AG04450 (cell line): ENCODE measurements at regions of chr15 and their contacts with region 1.

Region 1: DNA sequence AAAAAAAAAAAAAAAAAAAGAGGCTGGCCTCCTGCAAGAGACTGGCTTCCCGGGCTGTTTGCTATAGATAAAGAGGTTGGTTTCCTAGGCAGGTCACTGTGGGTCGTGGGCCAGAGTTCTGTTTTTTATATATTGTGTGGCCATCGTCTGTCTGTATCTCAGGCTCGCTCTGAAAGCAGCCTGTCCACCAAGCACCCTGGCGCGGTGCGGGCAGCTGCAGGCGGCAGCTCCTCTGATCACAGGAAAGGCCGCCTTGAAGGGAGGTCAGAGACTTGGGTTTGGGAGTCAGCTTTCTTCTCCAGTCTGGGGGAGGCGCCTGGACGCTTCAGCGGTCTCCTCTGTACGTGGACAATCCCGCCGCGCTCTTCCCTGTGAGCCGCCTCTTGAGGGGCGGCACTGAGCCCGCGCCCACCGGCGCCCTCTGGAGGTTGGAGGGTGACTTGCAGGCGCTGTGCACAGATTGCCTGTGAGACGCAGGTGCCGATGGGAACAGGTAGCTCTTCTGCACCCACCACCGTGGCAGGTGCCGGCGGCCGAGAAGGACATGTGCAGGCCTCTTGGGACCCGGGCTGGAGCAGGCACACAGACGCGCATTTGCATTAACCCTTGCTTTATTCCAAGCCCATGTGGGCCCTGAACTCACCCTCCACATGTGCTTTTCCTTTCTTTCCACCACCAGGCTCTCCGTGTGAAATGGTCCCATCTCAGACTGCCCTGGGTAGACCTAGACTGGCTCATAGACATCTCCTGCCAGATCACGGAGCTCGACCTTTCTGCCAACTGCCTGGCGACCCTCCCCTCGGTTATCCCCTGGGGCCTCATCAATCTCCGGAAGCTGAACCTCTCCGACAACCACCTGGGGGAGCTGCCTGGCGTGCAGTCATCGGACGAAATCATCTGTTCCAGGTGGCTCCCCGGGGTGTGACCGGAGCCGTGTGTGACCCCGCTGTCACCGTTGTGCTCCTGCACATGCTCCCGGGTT is 89.3 kb downstream of the LRRK1 start:
- DNase-seq: no peak
- H3K4me3 ChIP-seq: peak overlapping the region; percentile 54
- H3K27ac ChIP-seq: no peak overlapping the region
- H3K27me3 ChIP-seq: no peaks in the 10 kb centered on the region
- CTCF ChIP-seq: peak; percentile 97

Region 2: GRCh38 chr15:100191161-100191560 is 817.3 kb before region 1 on chr15:
- CTCF ChIA-PET with region 1: no interaction called
- POLR2A ChIA-PET with region 1: no interaction called
- DNase-seq: no peak
- H3K4me3 ChIP-seq: no peak overlapping the region
- H3K27ac ChIP-seq: no peak overlapping the region
- H3K27me3 ChIP-seq: no peaks in the 10 kb centered on the region
- CTCF ChIP-seq: no peak

Region 3: DNA sequence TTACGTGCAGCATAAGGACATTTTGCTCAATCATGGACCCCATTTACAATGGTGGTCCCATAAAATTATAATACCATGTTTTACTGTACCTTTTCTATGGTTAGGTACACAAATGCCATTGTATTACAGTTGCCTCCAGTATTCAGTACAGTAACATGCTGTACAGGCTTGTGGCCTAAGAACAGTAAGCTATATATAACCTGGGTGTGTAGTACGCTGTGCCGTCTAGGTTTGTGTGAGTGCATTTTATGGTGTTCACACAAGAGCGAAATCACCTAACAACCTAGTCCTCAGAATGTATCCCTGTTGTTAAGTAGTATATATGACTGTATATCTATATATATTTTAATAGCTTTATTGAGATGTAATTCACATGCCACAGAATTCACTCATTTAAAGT is 393.5 kb before region 1 on chr15:
- CTCF ChIA-PET with region 1: interaction called, 15 read pairs
- POLR2A ChIA-PET with region 1: no interaction called
- DNase-seq: no peak
- H3K4me3 ChIP-seq: no peak overlapping the region
- H3K27ac ChIP-seq: no peak overlapping the region
- H3K27me3 ChIP-seq: no peaks in the 10 kb centered on the region
- CTCF ChIP-seq: no peak

Region 4: GRCh38 chr15:100703032-100703578 is 305.3 kb before region 1 on chr15:
- CTCF ChIA-PET with region 1: no interaction called
- POLR2A ChIA-PET with region 1: no interaction called
- DNase-seq: peak; percentile 56
- H3K4me3 ChIP-seq: no peak overlapping the region
- H3K27ac ChIP-seq: peak overlapping the region; percentile 34
- H3K27me3 ChIP-seq: no peaks in the 10 kb centered on the region
- CTCF ChIP-seq: no peak

Region 5: DNA sequence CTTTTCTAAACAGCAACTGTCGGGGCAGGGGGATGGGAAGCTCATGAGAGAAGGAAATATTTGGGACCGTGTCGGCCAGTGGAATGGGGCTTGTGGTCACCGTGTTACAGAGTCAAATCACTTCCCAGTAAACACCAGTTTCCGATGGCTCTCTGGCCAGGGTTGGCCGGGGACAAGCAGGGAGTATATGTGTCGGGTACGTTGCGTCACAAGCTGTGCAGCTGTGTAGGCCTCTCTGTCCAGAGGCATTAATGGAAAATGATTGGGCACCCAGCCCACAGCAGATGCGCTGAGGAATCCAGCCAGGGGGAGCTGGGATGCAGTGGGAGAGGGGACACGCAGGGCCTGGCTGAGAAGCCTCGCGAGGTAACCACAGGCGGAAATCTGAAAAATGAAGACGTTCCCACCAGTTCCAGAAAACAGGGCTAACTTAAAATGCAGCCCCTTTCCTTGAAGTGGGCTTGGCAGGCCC is 144.6 kb before region 1 on chr15:
- CTCF ChIA-PET with region 1: interaction called, 25 read pairs
- POLR2A ChIA-PET with region 1: no interaction called
- DNase-seq: peak; percentile 55
- H3K4me3 ChIP-seq: no peak overlapping the region
- H3K27ac ChIP-seq: peak overlapping the region; percentile 68
- H3K27me3 ChIP-seq: no peaks in the 10 kb centered on the region
- CTCF ChIP-seq: 0 out of 2 replicates have a peak, but pooled peaks have one; percentile 8

Region 6: DNA sequence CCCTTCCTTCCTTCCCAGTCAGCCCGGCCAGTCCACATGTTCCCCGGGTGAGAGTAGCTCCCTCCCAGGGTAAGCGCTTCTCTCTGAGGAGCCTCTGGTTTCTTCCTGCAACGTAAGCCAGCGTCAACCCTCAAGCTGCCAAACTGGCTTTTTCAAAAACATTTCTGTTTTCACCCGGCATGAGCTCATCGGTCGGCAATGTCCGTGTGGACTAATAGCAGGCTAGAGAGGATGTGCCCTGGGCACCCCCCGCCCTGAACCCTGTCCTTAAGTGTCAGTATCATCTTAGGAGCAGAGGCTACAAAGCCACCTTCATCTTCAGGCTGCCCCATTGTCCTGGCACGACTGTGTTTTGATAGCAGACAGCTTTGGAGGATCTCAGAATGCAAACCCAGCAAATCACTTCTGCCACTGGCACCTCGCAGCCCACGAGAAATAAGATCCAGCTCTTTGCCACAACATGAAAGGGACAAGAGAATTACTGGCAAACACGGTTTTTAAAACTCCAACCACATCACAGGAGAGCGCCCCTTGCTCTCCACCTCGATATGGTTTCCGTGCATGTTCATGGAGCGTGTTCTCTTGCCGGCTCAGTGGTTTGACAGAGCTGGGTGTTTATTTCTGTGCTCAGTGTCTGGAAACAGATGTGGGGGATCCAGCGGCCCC is 118.9 kb before region 1 on chr15:
- CTCF ChIA-PET with region 1: interaction called, 16 read pairs
- POLR2A ChIA-PET with region 1: no interaction called
- DNase-seq: peak; percentile 69
- H3K4me3 ChIP-seq: no peak overlapping the region
- H3K27ac ChIP-seq: peak overlapping the region; percentile 65
- H3K27me3 ChIP-seq: no peaks in the 10 kb centered on the region
- CTCF ChIP-seq: no peak

Region 7: GRCh38 chr15:100944244-100944895 is 64.1 kb before region 1 on chr15:
- CTCF ChIA-PET with region 1: interaction called, 13 read pairs
- POLR2A ChIA-PET with region 1: no interaction called
- DNase-seq: no peak
- H3K4me3 ChIP-seq: no peak overlapping the region
- H3K27ac ChIP-seq: peak overlapping the region; percentile 39
- H3K27me3 ChIP-seq: no peaks in the 10 kb centered on the region
- CTCF ChIP-seq: no peak

Region 8: GRCh38 chr15:101024073-101024695 is 15.7 kb after region 1 on chr15:
- CTCF ChIA-PET with region 1: interaction called, 48 read pairs
- POLR2A ChIA-PET with region 1: interaction called, 3 read pairs
- DNase-seq: peak; percentile 84
- H3K4me3 ChIP-seq: no peak overlapping the region
- H3K27ac ChIP-seq: peak overlapping the region; percentile 99
- H3K27me3 ChIP-seq: no peaks in the 10 kb centered on the region
- CTCF ChIP-seq: no peak

Region 9: DNA sequence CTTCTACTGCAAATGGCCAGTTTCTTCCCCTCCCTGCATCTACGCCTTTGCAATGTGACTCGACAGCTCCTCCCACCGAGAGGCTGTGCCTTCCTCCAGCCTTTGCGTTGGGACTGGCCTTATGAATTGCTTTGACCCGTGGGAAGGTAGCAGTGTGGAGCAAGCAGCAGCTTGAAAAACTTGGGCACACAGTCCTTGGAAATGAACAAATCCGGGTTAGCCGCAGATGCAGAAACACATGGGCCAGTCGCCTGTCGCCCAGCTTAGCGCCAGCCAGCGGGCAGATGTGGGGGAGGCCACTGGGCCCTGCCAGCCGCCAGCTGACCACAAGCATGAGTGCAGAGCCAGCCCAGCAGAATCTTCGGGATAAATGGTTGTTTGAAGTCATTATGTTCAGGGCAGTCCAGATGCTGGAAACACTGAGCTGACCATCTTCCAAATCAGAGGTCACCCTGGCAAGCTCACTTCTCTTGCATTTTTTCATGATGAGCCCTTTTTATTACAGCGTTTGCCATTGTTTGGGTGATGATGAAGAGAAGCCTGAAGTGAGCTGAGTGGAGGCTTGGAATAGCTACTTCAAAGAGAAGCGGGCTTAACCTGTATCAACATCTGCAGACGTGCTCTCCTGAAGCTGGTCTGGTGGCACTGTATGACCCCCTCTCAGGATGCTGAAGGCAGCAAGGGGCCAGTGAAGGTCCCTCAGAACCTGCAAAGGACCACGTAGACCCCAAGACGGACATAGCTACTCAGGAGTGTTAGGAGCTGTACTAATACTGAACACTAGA is 259.1 kb after region 1 on chr15:
- CTCF ChIA-PET with region 1: interaction called, 40 read pairs
- POLR2A ChIA-PET with region 1: no interaction called
- DNase-seq: no peak
- H3K4me3 ChIP-seq: no peak overlapping the region
- H3K27ac ChIP-seq: peak overlapping the region; percentile 88
- H3K27me3 ChIP-seq: no peaks in the 10 kb centered on the region
- CTCF ChIP-seq: no peak